ENCODE measurements at regions of chr2 and their contacts with region 1.

Region 1: DNA sequence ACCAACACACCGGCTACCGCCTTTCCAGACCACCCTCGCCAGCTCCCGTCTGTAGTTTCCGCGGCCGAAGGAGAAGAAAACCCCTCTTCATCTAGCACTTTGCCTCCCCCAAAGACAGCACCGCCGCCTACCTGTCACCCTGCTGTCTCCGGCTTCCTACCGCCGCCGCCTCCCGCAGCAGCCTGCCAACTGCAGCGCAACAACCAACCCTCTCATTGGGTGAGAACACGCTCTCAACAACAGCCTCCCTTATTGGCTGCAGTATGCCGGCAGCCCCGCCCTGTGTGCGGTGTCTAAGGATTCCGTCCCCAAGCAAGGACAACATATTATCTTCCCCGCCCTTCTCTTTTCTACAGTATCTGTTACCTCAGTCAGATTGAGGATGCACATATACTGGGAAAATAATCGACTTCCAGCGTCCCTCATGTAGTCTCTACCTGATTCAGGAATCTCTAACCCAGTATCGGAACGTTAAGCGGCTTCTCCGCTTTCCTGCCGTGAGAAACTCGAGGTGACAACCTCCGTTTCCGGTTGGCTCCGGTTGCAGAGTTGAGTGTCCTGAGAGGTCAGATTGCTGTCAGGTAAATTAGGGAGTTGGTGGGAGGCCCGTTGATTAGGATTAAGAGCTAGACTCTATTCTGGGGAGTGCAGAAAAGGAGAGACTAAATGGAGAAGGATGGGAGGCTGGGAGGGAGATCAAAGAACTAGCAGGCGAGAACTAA is at the starts of genes HYCC2 and NDUFB3:
- DNase-seq: peak; percentile 97
- H3K4me3 ChIP-seq: peak within 1 kb of the TSS; percentile 83 to 94
- H3K27ac ChIP-seq: peak within 1 kb of the TSS; percentile 90
- H3K4me1 ChIP-seq: peaks cover 44% of the 10 kb centered on the region
- H3K27me3 ChIP-seq: no peaks in the 10 kb centered on the region
- CTCF ChIP-seq: no peak
- POLR2A ChIP-seq: peak in 1 of 2 donors; percentile 62
- total RNA-seq, gene HYCC2: 14.7 TPM
- total RNA-seq, gene NDUFB3: 38.8 TPM

Region 2: DNA sequence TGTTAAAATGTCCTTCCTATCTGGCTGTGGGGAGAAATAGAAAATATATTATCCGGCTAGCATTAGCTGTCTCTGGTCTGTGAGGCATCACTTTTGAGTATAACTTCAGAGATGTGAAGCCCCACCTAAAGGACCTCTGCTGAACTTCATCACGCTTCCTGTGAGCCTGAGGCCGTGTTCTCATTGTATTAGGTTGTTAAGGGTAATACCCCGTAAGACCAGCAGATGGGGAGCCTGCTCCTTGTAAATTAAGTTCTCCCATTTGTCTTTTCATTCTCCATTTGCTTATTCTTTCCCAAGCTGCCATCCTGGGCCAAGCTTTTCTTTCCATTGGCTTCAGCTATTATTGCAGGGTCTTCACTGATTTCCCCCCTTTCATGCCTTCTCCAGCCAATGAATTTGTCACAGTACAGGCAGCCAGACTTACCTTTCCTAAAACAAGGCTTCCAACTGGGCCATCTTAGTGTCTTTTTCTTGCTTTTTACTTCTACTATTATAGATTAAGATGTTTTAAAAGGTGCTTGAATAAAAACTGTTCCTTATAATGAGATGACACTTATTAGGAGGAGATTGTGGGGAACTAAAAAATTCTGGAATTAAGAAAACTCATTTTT is 170.1 kb before region 1 on chr2:
- intact Hi-C with region 1: loop called (anchors 5 kb)
- DNase-seq: no peak
- H3K4me3 ChIP-seq: no peak overlapping the region
- H3K27ac ChIP-seq: no peak overlapping the region
- H3K4me1 ChIP-seq: no peaks in the 10 kb centered on the region
- H3K27me3 ChIP-seq: no peaks in the 10 kb centered on the region
- CTCF ChIP-seq: peak; percentile 44 to 65 (median 52)
- POLR2A ChIP-seq: no peak

Region 3: DNA sequence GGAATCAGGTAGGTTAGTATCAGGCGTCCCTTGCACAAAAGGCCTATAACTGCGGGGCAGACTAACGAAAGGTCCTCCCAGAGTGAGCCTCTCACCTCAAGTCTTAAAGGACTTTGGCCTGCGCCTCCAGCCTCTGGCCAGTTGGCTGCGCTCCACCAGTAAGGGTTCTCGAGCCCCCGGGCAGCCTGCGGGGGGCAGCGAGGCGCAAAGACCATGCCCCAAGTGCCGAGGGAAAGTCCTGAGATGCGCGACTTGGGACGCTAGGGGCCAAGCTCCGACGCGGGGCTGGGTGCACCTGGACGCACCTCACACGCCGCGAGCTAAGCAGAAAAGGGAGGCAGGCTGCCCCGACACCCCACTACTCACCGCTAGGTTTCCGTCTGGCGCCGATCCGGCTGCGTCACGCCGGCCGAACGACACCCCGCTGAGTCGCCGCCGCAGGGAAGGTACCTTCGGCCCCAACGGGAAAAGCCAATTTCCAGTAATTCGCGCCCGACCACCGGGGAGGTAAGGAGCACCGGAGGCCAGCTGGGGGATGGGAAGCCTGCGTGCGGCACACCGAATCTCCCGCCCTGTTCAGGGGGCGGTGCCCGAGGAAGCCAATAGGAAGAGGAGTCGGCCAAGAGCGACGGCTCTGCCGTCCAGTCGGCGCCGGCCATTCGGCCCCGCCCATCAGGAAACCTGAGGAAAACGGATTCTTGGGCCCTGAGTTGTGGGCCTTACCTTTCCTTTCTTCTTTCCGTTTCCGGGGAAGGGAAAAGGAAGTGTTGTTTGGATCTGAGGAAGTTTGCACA is 108.3 kb before region 1 on chr2 and contains the start of gene ORC2:
- intact Hi-C with region 1: loop called (anchors 10 kb)
- DNase-seq: peak in 1 of 2 donors; percentile 94
- H3K4me3 ChIP-seq: peak within 1 kb of the TSS; percentile 81 to 97
- H3K27ac ChIP-seq: peak within 1 kb of the TSS; percentile 81
- H3K4me1 ChIP-seq: peaks cover 29% of the 10 kb centered on the region
- H3K27me3 ChIP-seq: no peaks in the 10 kb centered on the region
- CTCF ChIP-seq: peak in 1 of 3 experiments; percentile 52
- POLR2A ChIP-seq: no peak
- total RNA-seq, gene ORC2: 21.6 TPM

Region 4: DNA sequence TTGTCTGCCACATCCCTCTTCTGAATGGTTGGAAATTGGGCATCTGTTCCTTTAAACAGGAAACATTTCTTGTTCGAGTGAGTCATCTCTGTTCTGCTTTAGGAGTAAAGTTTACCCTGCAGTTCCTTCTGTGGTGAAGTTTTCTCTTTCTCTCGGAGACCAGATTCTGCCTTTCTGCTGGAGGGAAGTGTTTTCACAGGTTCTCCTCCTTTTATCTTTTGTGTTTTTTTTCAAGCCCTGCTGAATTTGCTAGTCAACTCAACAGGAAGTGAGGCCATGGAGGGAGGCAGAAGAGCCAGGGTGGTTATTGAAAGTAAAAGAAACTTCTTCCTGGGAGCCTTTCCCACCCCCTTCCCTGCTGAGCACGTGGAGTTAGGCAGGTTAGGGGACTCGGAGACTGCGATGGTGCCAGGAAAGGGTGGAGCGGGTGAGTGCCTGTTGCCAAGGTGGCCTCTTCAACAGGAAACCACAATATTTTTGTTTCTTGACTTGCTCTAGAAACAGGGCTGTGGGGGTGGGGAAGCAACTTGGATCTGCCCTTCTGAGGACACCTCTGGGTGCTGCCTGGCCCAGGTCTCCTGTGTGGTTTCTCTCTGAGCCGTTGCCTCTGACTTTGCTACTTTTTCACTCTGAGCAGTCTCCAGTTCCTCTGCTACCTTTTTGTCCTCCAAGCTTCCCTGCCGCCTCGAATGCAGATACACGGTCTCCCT is 186.5 kb after region 1 on chr2:
- intact Hi-C with region 1: no loop called
- DNase-seq: peak in 1 of 2 donors; percentile 88
- H3K4me3 ChIP-seq: peak overlapping the region; percentile 70 to 73
- H3K27ac ChIP-seq: peak overlapping the region; percentile 90
- H3K4me1 ChIP-seq: peaks cover 37% of the 10 kb centered on the region
- H3K27me3 ChIP-seq: no peaks in the 10 kb centered on the region
- CTCF ChIP-seq: no peak
- POLR2A ChIP-seq: no peak